ENCODE measurements at regions of chr20 and their contacts with region 1.

Region 1: GRCh38 chr20:57596998-57597939 is 23.0 kb downstream of the ZBP1 start:
- DNase-seq: peak; percentile 67 to 81 (median 70)
- ATAC-seq: peak; percentile 61
- H3K4me3 ChIP-seq: no peak overlapping the region
- H3K27ac ChIP-seq: no peak overlapping the region
- H3K4me1 ChIP-seq: peaks cover 8% of the 10 kb centered on the region
- H3K27me3 ChIP-seq: peaks cover 0 to 7% of the 10 kb centered on the region in 2 donors
- CTCF ChIP-seq: peak; percentile 74 to 96 (median 86)
- POLR2A ChIP-seq: no peak

Region 2: DNA sequence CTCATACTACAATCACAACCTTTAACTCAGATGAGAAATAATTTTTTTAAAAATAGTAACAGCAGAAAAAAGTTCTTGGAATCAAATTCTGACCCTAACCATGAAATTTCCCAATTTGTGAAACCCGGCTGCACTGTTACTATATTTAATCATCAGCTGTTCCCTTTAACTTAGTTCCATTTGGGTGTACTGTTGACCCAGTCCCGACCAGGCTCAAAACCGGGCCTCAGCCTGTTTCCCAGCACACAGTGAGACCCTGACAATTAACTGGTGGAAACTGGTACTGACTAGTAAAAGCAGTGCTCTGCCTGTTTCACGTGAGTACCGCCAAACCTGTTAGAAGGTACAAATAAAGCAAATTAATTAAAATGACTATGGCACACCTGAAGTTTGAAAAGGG is 79.4 kb before region 1 on chr20:
- intact Hi-C with region 1: loop called (anchors 2 kb)
- DNase-seq: no peak
- ATAC-seq: no peak
- H3K4me3 ChIP-seq: no peak overlapping the region
- H3K27ac ChIP-seq: no peak overlapping the region
- H3K4me1 ChIP-seq: no peaks in the 10 kb centered on the region
- H3K27me3 ChIP-seq: no peaks in the 10 kb centered on the region
- CTCF ChIP-seq: no peak
- POLR2A ChIP-seq: no peak

Region 3: DNA sequence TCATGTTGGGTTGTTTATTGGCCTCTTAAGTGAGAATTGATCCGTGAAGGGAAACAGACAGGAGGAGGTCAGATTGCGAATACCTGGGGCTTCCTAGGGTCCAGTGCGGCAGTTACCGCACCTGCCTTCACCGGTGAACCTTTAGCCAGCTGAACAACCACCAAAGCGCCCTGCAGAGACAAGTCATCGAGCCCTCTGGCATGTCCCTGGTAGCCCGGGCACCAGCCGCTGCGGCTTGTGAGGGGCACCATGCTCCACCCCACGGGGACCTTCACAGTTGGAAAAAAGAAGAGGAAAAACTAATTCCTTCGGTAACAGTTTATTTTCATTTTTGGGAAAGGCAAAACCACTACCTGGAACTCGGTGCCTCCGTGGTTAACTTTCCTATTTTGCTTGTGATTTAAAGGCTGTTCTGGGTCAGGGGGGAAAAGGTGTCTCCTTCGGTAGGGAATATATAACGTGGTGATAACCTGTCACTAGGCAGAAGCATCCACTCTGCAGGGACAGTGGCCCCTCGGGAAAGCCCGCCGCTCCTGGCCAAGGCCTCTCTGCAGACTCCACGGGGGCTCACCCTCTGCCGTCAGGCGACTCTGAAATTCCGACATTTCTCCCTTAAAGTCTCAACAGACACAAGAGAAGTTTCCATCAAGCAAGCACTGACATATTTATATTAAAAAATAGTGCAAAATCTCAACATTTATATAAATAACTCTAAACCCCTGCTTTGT is 53.7 kb after region 1 on chr20:
- intact Hi-C with region 1: no loop called
- DNase-seq: no peak
- ATAC-seq: no peak
- H3K4me3 ChIP-seq: no peak overlapping the region
- H3K27ac ChIP-seq: no peak overlapping the region
- H3K4me1 ChIP-seq: no peaks in the 10 kb centered on the region
- H3K27me3 ChIP-seq: no peaks in the 10 kb centered on the region
- CTCF ChIP-seq: no peak
- POLR2A ChIP-seq: no peak

Region 4: GRCh38 chr20:57709931-57710799 is 112.9 kb after region 1 on chr20 and contains the start of gene PMEPA1:
- intact Hi-C with region 1: no loop called
- DNase-seq: peak; percentile 95 to 96 (median 96)
- ATAC-seq: peak; percentile 86
- H3K4me3 ChIP-seq: peak within 1 kb of the TSS; percentile 29 to 44
- H3K27ac ChIP-seq: peak within 1 kb of the TSS; percentile 82 to 93 (median 89)
- H3K4me1 ChIP-seq: peaks cover 43% of the 10 kb centered on the region
- H3K27me3 ChIP-seq: no peaks in the 10 kb centered on the region
- CTCF ChIP-seq: peak in 3 of 7 experiments; percentile 14 to 27 (median 27)
- POLR2A ChIP-seq: peak; percentile 74 to 94 (median 83)
- total RNA-seq, gene PMEPA1: 22.7 to 23.9 TPM

Region 5: DNA sequence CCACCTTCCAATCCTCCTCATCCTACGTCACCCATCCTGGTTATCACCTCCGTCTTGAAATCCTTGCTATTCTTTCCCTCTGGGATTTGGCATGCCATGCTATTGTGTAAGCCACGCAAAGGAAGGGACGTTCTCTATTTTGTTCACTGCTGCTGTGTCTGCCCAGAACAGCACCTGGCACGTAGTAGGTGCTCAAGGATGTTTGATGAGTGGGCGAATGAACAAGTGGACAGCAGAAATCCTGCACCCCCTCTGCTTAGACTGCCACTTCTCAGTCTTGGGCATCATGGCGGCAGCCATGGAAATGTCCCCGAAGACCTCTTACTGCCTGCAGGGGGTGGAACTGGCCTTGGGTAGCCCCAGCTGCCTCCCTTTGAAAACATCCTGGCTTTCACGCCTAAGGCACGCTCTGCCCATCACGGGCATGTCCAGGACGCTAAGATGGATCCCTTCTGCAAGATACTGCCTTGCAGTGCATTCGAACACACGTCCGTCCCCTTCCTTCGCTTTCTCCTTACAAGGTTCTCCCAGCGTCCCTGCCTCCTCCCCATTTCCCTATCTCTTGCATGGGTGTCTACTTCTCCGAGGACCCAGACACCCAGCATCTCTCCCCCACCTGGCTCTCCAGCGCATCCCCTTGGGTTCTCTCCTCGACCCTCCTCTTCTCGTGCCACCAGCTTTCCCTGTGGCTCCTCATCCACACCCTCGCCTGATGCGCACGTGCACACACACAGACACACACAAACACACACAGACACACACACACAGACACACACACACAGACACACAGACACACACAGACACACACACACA is 598.9 kb after region 1 on chr20:
- intact Hi-C with region 1: loop called (anchors 5 kb)
- DNase-seq: no peak
- ATAC-seq: no peak
- H3K4me3 ChIP-seq: no peak overlapping the region
- H3K27ac ChIP-seq: no peak overlapping the region
- H3K4me1 ChIP-seq: no peaks in the 10 kb centered on the region
- H3K27me3 ChIP-seq: no peaks in the 10 kb centered on the region
- CTCF ChIP-seq: no peak
- POLR2A ChIP-seq: no peak

Region 6: GRCh38 chr20:58209652-58210397 is 612.6 kb after region 1 on chr20:
- intact Hi-C with region 1: loop called (anchors 5 kb)
- DNase-seq: peak; percentile 76 to 87 (median 84)
- ATAC-seq: peak; percentile 85
- H3K4me3 ChIP-seq: no peak overlapping the region
- H3K27ac ChIP-seq: no peak overlapping the region
- H3K4me1 ChIP-seq: peaks cover 10% of the 10 kb centered on the region
- H3K27me3 ChIP-seq: no peaks in the 10 kb centered on the region
- CTCF ChIP-seq: peak; percentile 100
- POLR2A ChIP-seq: no peak

Measured in body of pancreas (tissue), 4 donors.